ENCODE measurements at regions of chr4 and their contacts with region 1.

Region 1: DNA sequence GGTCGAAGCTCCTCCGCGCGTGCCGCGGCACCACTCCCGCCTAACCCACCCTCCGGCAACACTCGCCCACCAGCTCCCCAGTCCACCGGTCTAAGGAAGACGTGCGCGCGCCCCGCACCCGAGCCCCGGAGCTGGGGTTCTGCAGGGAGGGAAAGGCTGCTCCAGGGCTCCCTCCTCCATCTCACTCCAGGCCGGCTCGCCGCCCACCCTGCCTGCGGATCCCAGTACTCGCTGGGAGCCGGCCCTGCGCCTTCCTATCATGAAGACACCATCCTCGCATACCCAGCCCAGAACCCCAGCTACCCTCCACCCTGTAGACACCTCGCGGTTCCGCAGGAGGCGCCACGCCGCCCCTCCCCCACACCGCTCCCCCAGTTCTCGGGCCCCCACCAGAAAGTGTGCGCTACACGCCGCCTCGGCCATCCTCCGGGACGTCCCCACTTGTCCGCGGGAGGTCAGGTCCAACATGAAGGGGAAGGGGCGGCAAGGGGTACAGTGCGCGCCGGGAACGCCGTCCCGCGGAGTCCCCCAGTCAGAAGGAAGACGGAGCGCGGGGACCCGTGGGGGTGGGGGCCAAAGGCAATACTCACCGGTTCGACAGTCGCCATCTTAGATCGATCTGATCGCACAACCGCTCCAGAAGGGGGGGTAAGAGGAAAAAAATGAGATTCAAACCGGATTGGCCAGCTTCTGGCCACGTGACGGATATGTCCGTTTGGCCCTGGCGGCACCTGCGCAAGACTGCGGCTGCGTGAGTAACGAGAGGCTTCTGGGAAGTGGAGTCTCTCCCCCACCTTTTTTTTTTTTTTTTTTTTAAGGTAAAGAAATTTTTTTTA is at the start of gene EIF4E:
- DNase-seq: peak; percentile 98
- ATAC-seq: peak; percentile 80
- H3K4me3 Mint-ChIP-seq: peak within 1 kb of the TSS; percentile 92
- H3K27ac Mint-ChIP-seq: peak within 1 kb of the TSS; percentile 100
- H3K4me1 Mint-ChIP-seq: peaks cover 47% of the 10 kb centered on the region
- H3K27me3 Mint-ChIP-seq: no peaks in the 10 kb centered on the region
- total RNA-seq, gene EIF4E: 132 to 149 TPM

Region 2: GRCh38 chr4:98482847-98483806 is 445.6 kb before region 1 on chr4:
- CTCF ChIA-PET with region 1: interaction called, 3 read pairs
- POLR2A ChIA-PET with region 1: interaction called, 4 read pairs
- intact Hi-C with region 1: loop called (anchors 1 to 2 kb)
- DNase-seq: peak; percentile 74
- ATAC-seq: peak; percentile 84
- H3K4me3 Mint-ChIP-seq: peak overlapping the region; percentile 54
- H3K27ac Mint-ChIP-seq: peak overlapping the region; percentile 98
- H3K4me1 Mint-ChIP-seq: peaks cover 80% of the 10 kb centered on the region
- H3K27me3 Mint-ChIP-seq: no peaks in the 10 kb centered on the region

Region 3: DNA sequence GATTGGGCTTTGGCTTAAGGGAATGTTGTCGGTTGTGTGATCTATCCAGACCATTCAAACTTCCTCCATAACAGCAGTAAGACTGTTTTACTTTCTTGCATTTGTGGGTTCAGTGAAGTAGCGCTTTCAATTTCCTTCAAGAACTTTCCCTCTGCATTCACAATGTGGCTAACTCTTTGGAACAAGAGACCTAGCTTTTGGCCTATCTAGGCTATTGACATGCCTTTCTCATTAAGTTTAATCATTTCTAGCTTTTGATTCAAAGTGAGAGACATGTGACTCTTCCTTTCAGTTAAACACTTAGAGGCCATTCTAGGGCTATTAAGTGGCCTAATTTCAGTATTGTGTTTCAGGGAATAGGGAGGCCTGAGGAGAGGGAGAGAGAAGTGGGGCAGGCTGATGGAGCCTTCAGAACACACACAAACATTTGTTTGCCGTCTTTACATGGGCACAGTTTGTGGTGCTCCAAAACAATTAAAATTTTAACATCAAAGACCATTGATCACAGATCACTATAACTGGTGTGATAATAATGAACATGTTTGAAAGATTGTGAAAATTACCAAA is 125.8 kb after region 1 on chr4:
- CTCF ChIA-PET with region 1: interaction called, 15 read pairs
- POLR2A ChIA-PET with region 1: interaction called, 9 read pairs
- intact Hi-C with region 1: loop called (anchors 1 to 2 kb)
- DNase-seq: no peak
- ATAC-seq: peak; percentile 23
- H3K4me3 Mint-ChIP-seq: no peak overlapping the region
- H3K27ac Mint-ChIP-seq: peak overlapping the region; percentile 63
- H3K4me1 Mint-ChIP-seq: peaks cover 44% of the 10 kb centered on the region
- H3K27me3 Mint-ChIP-seq: no peaks in the 10 kb centered on the region

Region 4: DNA sequence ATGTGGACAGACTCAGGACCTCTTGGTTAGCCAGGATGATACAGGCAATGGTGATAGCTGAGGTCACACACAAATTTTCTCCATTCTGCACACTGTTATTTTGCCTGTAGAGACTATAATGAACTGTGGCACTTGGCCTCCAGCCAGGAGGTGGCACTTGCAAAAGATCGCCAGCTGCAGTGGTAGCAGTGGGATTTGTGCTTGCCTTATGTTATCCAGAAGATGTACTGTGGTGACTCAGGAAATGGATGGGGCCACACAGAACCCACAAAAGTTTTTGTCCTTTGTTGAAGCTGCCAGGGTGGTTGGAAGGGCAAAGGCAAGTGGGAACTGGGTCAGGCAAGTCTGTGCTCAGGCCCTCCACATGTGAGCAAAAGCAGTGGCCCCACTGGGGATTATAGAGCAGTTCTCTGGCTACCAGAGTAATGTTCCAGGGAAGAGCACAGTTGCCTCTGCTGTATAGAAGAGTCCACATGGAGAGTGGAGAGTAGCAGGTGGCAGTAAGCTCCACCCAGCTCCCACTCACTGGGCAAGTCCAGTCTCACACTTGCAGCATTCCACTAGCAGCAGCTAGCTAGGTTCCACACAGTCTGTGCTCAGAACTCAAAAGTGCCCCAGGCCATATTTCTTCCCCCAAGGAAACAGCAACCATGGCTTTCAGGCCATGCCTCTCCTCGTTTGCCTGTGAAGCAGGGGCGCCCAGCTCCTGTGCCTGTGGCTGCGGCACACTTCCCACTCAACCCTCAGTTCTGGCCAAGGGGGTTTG is 576.3 kb after region 1 on chr4:
- CTCF ChIA-PET with region 1: no interaction called
- POLR2A ChIA-PET with region 1: no interaction called
- intact Hi-C with region 1: loop called in 1 of 2 experiments (anchors 5 kb)
- DNase-seq: peak; percentile 27
- ATAC-seq: no peak
- H3K4me3 Mint-ChIP-seq: no peak overlapping the region
- H3K27ac Mint-ChIP-seq: peak overlapping the region; percentile 37
- H3K4me1 Mint-ChIP-seq: peaks cover 53% of the 10 kb centered on the region
- H3K27me3 Mint-ChIP-seq: no peaks in the 10 kb centered on the region